Left cardiac atrium (tissue), 4 donors: ENCODE measurements at regions of chr11 and their contacts with region 1.

Region 1: DNA sequence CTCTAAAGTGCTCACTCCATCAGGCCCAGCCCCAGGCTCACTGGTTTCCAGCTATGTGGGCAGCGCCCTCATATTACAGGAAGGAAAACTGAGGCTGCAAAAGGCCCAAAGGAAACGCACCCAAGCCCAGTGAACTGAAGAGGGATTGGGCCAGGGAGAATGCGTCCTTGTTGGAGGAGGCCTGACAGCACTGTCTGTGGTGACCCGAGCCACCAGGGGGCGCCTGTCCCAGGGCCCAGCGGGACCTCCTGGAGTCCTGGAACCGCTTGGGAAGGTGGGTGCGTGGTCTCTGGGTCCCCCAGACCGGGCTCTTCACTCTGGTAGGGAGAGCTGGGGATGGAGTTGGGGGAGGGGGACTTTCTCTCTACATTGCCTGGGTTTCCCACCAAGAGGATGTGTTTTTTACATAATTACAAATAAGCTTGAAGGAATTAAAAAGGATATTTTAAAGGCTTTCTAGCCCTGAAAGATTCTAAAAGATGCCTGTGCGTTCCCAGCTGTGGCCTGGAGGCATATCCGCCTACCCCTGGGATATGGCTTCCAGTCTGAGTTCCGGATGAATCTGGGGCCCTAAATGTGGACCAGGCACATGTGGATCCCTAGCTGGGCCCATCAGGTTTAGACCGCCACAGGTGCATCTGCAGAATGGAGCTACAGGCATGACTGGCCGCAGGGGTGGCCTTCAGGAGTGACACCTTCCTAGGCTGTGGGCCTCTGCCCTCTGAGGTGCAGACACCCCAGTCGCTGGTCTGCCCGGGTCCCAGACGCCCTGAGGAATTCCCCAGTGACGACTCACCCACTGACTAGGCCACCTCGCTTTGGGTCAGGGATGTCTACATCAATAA is 4.2 kb downstream of the SPI1 start:
- DNase-seq: peak; percentile 90
- ATAC-seq: peak; percentile 75 to 85

Region 2: GRCh38 chr11:47152953-47153950 is 220.8 kb before region 1 on chr11:
- intact Hi-C with region 1: no loop called
- DNase-seq: peak; percentile 78
- ATAC-seq: peak; percentile 76 to 79

Region 3: DNA sequence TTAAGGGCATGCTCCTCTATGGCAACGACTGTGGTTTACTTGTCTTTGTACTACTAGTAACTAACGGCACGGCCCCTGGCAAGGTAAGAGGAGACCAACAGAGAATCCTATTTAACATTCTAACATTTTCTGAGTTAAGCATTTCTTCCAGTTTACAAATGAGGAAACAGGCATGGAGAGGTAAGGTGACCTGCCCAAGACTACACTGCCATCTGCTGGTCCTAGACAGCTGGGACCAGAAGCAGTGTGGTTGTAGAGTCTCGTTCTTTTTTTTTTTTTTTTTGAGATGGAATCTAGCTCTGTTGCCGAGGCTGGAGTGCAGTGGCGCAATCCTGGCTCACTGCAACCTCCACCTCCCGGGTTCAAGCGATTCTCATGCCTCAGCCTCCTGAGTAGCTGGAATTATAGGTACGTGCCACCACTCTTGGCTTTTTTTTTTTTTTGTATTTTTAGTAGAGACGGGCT is 80.1 kb after region 1 on chr11:
- intact Hi-C with region 1: loop called (anchors 2 to 5 kb)
- DNase-seq: peak; percentile 72
- ATAC-seq: peak; percentile 90 to 91

Region 4: DNA sequence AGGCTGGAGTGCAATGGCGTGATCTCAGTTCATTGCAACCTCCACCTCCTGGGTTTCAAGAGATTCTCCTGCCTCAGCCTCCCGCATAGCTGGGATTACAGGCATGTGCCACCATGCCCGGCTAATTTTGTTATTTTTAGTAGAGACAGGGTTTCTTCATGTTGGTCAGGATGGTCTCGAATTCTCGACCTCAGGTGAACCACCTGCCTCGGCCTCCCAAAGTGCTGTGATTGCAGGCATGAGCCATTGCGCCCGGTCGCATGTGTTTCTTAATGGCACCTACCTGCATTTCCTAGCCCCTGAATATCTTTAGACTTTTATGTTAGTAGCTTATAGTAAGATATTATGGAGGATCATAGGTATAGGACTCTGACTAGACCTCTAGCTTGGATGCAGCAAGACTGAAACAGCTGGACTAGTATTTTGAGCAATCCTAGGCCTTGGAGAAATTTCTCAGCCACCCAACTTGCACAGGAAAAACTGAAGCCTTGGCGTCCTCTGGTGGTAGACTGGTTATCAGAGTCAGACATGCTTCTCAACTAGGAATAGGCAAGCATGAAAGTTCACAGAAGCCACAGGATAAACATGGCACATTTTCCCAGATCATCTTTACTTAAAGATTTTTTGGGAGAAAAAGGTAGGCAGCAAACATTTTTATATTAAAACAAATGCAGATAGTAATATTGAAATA is 242.8 kb after region 1 on chr11:
- intact Hi-C with region 1: loop called in 1 of 2 experiments (anchors 10 kb)
- DNase-seq: peak; percentile 36
- ATAC-seq: peak; percentile 81 to 88

Region 5: GRCh38 chr11:47847892-47848635 is 474.0 kb after region 1 on chr11 and contains the start of gene NUP160:
- intact Hi-C with region 1: loop called (anchors 5 to 10 kb)
- DNase-seq: peak; percentile 88
- ATAC-seq: peak; percentile 94 to 97
- total RNA-seq, gene NUP160: 13.7 to 18.3 TPM